ENCODE measurements at regions of chr10 and their contacts with region 1.

Region 1: GRCh38 chr10:114526504-114527238 is 122.4 kb upstream of the AFAP1L2 start:
- DNase-seq: no peak

Region 2: DNA sequence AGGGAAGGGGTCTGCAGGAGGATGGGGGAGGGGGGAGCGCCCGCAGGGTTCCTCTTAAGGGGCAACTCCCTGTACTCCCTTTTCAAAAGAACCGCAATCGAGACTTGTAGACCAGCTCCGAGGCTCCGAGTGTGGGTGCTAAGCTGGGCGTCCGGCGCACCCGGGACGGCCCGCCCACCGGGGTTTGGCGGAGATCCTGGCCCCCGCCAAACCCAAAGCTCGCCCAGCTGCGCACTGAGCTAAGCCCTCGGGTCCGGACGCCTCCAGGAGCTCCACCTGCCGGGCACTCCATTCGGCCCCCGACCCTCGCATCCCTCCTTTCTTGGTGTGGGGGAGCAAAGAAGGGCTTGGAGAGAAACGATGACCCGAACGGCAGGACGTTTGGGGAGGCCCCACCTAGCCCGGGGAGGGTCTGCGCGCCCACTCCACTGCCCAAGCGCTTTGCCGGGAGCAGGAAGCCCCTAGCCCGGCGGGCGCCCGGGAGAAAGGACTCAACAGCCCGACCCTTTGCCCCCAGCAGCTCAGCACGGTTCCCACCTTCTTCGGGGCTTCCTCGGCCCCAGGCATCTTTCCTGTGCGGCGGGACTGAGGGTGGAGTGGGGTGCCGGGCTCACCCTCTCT is 123.0 kb before region 1 on chr10:
- intact Hi-C with region 1: no loop called
- DNase-seq: no peak

Region 3: GRCh38 chr10:114507449-114507848 is 19.2 kb before region 1 on chr10:
- intact Hi-C with region 1: loop called (anchors 2 kb)
- DNase-seq: no peak

Region 4: GRCh38 chr10:114541081-114541796 is 14.6 kb after region 1 on chr10:
- intact Hi-C with region 1: loop called (anchors 2 kb)
- DNase-seq: no peak

Region 5: DNA sequence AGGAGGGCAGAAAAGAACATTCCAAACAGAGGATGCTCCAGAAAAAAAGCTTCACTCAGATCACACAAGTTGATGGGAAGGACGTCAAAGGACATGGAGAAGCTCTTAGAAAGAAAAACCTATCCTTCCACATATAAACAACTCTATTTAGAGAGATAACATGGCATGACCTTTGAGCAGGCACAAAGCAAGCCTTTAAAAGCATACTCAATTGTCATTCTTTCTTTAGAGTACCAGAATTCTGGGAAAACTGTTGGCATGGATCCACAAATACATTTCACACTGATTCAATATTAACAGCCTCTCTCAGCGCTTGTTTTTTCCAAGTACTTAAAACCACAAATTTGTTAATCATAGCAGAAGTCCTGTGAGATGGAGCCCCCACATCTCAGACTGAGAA is 138.7 kb after region 1 on chr10:
- intact Hi-C with region 1: no loop called
- DNase-seq: no peak

Region 6: GRCh38 chr10:114684085-114684821 is 157.6 kb after region 1 on chr10:
- intact Hi-C with region 1: no loop called
- DNase-seq: peak; percentile 84

Region 7: DNA sequence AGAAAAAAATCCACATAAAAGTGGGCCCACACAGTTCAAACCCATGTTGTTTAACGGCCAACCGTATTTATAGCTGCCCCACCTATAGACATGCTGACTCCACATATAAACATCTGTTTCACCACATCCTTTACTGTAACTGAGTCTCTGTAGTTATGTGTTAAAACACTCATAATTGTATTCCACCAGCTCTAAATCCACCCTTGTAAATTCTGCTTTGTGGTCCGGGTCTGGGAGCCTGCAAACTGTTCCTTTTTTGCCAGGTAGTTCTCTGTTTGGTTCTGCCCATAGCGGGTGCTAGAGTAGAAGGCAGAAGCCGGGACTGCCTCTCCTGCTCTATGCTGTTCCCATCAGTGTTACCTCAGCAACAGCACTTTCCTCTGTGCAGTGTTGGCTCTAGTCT is 274.7 kb after region 1 on chr10:
- intact Hi-C with region 1: no loop called
- DNase-seq: no peak